ENCODE measurements at regions of chr10 and their contacts with region 1.

Region 1: GRCh38 chr10:74419958-74420375 is 268.9 kb downstream of the ADK start:
- DNase-seq: peak; percentile 37 to 67 (median 55)
- H3K4me3 ChIP-seq: no peak overlapping the region
- H3K27ac ChIP-seq: no peak overlapping the region
- H3K4me1 ChIP-seq: peaks cover 0 to 10% (median 6%) of the 10 kb centered on the region in 4 experiments
- H3K27me3 ChIP-seq: no peaks in the 10 kb centered on the region

Region 2: DNA sequence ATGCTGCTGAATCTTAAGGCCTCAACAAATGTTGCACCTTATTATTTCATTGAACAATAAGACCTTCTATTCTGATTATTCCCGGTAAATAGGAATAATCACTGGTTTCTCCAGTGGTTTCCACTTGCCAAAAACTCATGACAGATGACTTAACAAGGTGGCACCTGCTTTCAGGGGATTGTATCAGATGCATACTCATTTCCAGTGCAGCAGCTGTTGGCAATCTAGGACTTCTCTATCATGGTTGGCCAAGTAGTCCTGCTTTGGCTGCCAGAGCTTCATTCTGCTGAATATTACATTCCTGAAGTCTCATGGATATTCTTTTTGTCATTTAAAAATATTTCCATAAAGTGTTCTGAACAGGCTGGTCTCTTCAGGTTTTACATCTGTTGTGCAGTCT is 75.7 kb before region 1 on chr10:
- CTCF ChIA-PET with region 1: no interaction called
- POLR2A ChIA-PET with region 1: no interaction called
- DNase-seq: no peak
- H3K4me3 ChIP-seq: no peak overlapping the region
- H3K27ac ChIP-seq: no peak overlapping the region
- H3K4me1 ChIP-seq: no peaks in the 10 kb centered on the region
- H3K27me3 ChIP-seq: no peaks in the 10 kb centered on the region

Region 3: DNA sequence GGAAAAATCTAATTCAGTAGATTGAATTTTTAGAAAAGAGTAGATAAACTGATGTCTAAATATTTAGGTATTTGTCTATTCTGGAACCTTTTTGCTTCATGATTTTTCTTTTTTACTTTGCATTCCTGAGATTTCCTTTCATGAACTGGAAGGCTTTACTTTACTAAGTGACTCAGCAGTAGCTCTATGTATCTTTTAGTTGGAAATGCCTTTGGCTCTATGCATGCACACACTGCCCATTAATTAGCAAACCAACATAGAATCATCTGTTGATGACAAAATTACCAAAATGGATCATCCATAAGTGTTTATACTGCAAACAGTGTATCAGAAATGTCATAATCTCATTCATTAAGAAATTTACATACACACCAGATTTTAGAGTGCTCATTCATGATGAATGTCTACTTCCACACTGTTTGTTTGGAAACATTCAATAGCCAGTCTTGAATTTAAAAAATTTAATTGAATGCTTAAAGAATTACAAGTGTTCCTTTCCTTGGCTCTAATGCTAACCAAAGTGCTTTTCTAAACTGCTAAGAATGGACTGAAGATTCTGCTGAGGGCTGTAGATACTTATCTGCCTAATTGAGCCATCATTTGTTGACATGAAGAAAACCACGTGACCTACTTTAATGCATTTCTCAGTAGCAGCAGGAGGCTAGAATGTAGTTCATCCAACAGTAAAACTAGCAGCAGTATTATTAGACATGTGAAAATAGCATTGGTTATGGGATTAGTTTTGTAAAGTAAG is 13.1 kb after region 1 on chr10:
- CTCF ChIA-PET with region 1: interaction called, 13 read pairs
- POLR2A ChIA-PET with region 1: no interaction called
- DNase-seq: no peak
- H3K4me3 ChIP-seq: no peak overlapping the region
- H3K27ac ChIP-seq: no peak overlapping the region
- H3K4me1 ChIP-seq: no peaks in the 10 kb centered on the region
- H3K27me3 ChIP-seq: no peaks in the 10 kb centered on the region

Region 4: GRCh38 chr10:74460812-74461211 is 40.8 kb after region 1 on chr10:
- CTCF ChIA-PET with region 1: no interaction called
- POLR2A ChIA-PET with region 1: no interaction called
- DNase-seq: no peak
- H3K4me3 ChIP-seq: no peak overlapping the region
- H3K27ac ChIP-seq: no peak overlapping the region
- H3K4me1 ChIP-seq: peaks cover 0 to 2% (median 0%) of the 10 kb centered on the region in 4 experiments
- H3K27me3 ChIP-seq: no peaks in the 10 kb centered on the region